ENCODE measurements at regions of chr16 and their contacts with region 1.

Region 1: GRCh38 chr16:1363501-1364041 is 11.8 kb downstream of the GNPTG start:
- DNase-seq: peak; percentile 41
- H3K4me3 ChIP-seq: no peak overlapping the region
- H3K27ac ChIP-seq: no peak overlapping the region
- H3K4me1 ChIP-seq: no peaks in the 10 kb centered on the region
- H3K27me3 ChIP-seq: no peaks in the 10 kb centered on the region
- CTCF ChIP-seq: peak; percentile 86 to 93
- POLR2A ChIP-seq: no peak

Region 2: GRCh38 chr16:799948-800833 is 563.4 kb before region 1 on chr16 and contains the start of gene GNG13:
- CTCF ChIA-PET with region 1: no interaction called
- POLR2A ChIA-PET with region 1: no interaction called
- dilution Hi-C with region 1: no loop called
- intact Hi-C with region 1: no loop called
- DNase-seq: no peak
- H3K4me3 ChIP-seq: no peak within 1 kb of the TSS
- H3K27ac ChIP-seq: no peak within 1 kb of the TSS
- H3K4me1 ChIP-seq: no peaks in the 10 kb centered on the region
- H3K27me3 ChIP-seq: peaks cover 11 to 18% of the 10 kb centered on the region in 2 experiments
- CTCF ChIP-seq: no peak
- POLR2A ChIP-seq: no peak
- total RNA-seq, gene GNG13: not detected in 2 replicates

Region 3: GRCh38 chr16:1288611-1289474 is 74.7 kb before region 1 on chr16:
- CTCF ChIA-PET with region 1: no interaction called
- POLR2A ChIA-PET with region 1: no interaction called
- dilution Hi-C with region 1: no loop called
- intact Hi-C with region 1: no loop called
- DNase-seq: no peak
- H3K4me3 ChIP-seq: no peak overlapping the region
- H3K27ac ChIP-seq: no peak overlapping the region
- H3K4me1 ChIP-seq: no peaks in the 10 kb centered on the region
- H3K27me3 ChIP-seq: peaks cover 17 to 18% of the 10 kb centered on the region in 2 experiments
- CTCF ChIP-seq: no peak
- POLR2A ChIP-seq: no peak

Region 4: DNA sequence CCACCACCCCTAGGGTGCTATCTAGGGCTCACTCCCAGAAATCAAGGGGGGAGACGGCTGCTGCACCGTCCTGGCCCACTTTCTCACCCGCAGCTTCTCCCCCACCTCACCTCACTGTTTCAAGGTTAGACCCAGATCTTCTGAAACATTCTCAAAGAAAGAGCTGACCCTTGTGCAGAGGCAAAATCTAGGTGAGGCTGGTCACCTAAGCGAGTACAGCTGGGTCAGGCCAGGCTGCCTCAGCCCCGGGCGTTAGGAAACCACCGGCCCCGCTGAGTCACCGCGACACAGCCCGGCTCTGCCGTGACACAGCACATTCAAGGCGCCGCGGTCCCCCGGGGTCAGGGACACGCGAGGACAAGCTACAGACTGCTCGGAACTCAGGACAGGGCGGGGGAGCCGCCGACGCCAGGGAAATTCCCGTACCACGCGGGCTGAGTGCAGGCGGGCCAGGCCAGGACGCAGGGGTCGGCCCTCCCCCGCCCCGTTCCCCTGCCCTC is 15.3 kb after region 1 on chr16:
- CTCF ChIA-PET with region 1: interaction called, 24 read pairs
- POLR2A ChIA-PET with region 1: interaction called, 6 read pairs
- dilution Hi-C with region 1: no loop called
- intact Hi-C with region 1: no loop called
- DNase-seq: peak; percentile 72
- H3K4me3 ChIP-seq: peak overlapping the region; percentile 10 to 41 (median 39)
- H3K27ac ChIP-seq: peak overlapping the region; percentile 91
- H3K4me1 ChIP-seq: peaks cover 12% of the 10 kb centered on the region
- H3K27me3 ChIP-seq: no peaks in the 10 kb centered on the region
- CTCF ChIP-seq: no peak
- POLR2A ChIP-seq: no peak

Region 5: GRCh38 chr16:1413684-1414531 is 50.3 kb after region 1 on chr16:
- CTCF ChIA-PET with region 1: interaction called, 19 read pairs
- POLR2A ChIA-PET with region 1: no interaction called
- dilution Hi-C with region 1: no loop called
- intact Hi-C with region 1: no loop called
- DNase-seq: peak; percentile 54
- H3K4me3 ChIP-seq: peak overlapping the region; percentile 53 to 71 (median 66)
- H3K27ac ChIP-seq: peak overlapping the region; percentile 8
- H3K4me1 ChIP-seq: peaks cover 3% of the 10 kb centered on the region
- H3K27me3 ChIP-seq: no peaks in the 10 kb centered on the region
- CTCF ChIP-seq: peak; percentile 71 to 78
- POLR2A ChIP-seq: no peak

Region 6: DNA sequence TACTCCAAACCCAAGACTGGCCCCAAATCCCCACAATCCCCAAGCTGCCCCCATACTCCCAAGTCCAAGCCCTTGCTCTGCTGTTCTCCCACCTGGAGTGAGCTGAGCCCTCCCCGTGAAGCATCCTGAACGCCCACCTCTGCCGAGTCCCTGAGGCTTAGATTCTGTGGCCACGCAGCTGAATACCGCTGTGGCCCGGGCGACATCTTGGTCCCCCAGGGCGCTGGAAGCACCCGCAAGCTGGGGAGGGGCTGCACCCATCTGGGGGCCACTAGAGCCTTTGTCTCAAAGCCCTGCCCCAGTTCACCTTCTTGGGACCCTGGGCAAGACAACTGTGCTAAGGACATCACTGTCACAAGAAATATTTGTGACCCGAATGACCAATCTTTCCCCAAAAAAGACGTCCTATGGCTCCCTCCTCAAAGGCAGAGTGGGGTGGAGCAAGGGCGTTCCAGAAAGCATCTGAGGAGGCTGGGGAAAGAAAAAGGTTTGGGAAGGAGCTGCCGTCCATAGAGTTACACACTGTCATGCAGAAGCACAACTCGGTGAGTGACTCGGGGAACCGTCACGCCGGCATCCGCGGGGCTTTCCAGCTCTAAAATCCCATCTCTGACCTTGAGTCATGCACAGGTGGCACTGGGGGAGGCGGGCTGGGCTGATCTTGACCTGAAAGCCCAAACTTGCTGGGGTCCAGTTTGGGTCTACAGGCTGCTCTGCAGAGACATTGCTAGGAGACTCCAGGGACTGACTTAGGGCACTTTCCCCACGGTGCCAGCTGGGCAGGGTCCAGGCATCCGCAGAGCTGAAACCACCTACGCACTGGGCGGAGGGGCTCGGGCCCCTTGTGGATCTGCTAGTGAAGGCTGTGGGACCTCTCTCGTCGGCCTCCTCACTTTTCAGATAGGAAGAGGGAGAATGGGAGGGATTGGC is 118.6 kb after region 1 on chr16:
- CTCF ChIA-PET with region 1: no interaction called
- POLR2A ChIA-PET with region 1: no interaction called
- dilution Hi-C with region 1: no loop called
- intact Hi-C with region 1: no loop called
- DNase-seq: no peak
- H3K4me3 ChIP-seq: no peak overlapping the region
- H3K27ac ChIP-seq: no peak overlapping the region
- H3K4me1 ChIP-seq: no peaks in the 10 kb centered on the region
- H3K27me3 ChIP-seq: no peaks in the 10 kb centered on the region
- CTCF ChIP-seq: no peak
- POLR2A ChIP-seq: no peak